ENCODE measurements at regions of chr9 and their contacts with region 1.

Region 1: DNA sequence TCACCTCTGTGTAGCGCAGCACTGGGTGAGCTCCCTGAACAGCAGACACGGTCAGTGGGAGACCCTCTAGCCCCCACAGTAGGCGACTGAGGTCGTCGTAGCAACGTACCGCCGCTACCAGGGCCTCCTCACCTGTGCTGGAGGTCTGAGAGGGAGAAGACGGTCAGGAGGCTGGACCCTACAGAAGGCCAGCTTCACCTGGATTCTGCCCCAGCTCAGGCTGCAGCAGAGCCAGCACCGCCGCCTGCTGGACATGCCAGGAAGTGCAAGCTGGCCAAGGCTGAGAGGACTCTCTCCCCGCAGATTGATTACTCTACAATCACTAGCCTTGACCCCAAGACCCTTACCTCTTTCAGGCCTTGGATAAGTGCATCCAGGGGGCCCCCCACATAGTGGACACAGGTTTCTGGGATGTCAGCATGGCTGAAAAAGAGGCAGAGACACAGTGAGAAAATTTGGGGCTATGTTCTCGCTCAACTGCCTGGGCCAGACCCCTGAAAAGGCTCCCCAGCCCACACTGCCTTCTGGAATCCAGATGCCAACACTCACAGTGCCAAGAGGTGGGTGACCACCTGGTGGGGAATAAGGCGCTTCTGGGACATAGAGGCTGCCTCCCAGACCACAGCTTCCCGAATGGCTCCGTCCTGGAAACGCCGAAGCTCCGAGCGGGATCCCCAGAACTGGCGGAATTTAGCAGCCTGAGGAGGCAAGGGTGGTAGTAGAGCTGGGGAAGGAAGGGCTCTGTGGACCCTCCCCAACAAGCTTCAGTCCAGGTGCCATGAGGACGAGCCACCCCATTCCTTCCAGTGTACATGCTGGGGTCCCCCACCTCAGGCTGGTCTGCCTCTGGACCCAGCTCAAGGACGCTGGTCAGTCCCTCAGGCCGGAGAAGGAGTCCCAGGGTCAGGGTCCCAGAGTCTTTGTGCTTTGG is 6.9 kb downstream of the NOL6 start:
- DNase-seq: no peak
- H3K4me3 ChIP-seq: no peak overlapping the region
- CTCF ChIP-seq: peak; percentile 93

Region 2: GRCh38 chr9:33404788-33405362 is 62.0 kb before region 1 on chr9:
- CTCF ChIA-PET with region 1: interaction called, 36 read pairs
- POLR2A ChIA-PET with region 1: no interaction called
- DNase-seq: no peak
- H3K4me3 ChIP-seq: no peak overlapping the region
- CTCF ChIP-seq: no peak

Region 3: GRCh38 chr9:33446946-33447798 is 19.7 kb before region 1 on chr9 and contains the start of gene AQP3:
- CTCF ChIA-PET with region 1: interaction called, 284 read pairs
- POLR2A ChIA-PET with region 1: no interaction called
- DNase-seq: no peak
- H3K4me3 ChIP-seq: peak within 1 kb of the TSS; percentile 52
- CTCF ChIP-seq: peak; percentile 45

Region 4: DNA sequence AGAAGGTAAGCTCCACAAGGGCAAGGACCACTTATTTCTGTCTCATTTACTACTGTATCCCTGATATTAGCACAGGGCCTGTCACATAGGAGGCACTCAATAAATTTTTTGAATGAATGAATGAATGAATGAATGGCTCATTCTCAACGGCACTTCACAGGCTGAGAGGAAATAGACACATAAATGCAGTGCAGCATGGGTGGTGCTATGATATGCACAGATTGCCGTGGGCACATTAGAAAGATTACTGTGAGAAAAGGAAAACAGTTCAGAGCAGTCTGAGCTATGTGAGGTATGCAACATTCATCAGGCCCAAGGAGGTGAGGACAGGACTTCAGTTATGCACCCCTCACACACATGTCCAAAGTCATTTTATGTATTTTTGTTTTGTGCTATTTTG is 13.3 kb after region 1 on chr9:
- CTCF ChIA-PET with region 1: interaction called, 40 read pairs
- POLR2A ChIA-PET with region 1: no interaction called
- DNase-seq: peak; percentile 21
- H3K4me3 ChIP-seq: no peak overlapping the region
- CTCF ChIP-seq: no peak

Region 5: GRCh38 chr9:33535541-33535940 is 68.7 kb after region 1 on chr9:
- CTCF ChIA-PET with region 1: no interaction called
- POLR2A ChIA-PET with region 1: no interaction called
- DNase-seq: no peak
- H3K4me3 ChIP-seq: no peak overlapping the region
- CTCF ChIP-seq: no peak